Activated CD8-positive, alpha-beta T cell treated with anti-CD3 and anti-CD28 coated beads for 36 hours (primary cell): ENCODE measurements at regions of chr2 and their contacts with region 1.

Region 1: GRCh38 chr2:229821316-229821715 is 100.5 kb downstream of the TRIP12 start:
- DNase-seq: no peak
- ATAC-seq: no peak
- H3K4me3 Mint-ChIP-seq: no peak overlapping the region
- H3K27ac Mint-ChIP-seq: no peak overlapping the region
- H3K4me1 Mint-ChIP-seq: peaks cover 25% of the 10 kb centered on the region
- H3K27me3 Mint-ChIP-seq: no peaks in the 10 kb centered on the region
- CTCF ChIP-seq: no peak

Region 2: GRCh38 chr2:229810786-229811185 is 10.5 kb before region 1 on chr2:
- CTCF ChIA-PET with region 1: no interaction called
- POLR2A ChIA-PET with region 1: no interaction called
- intact Hi-C with region 1: no loop called
- DNase-seq: no peak
- ATAC-seq: no peak
- H3K4me3 Mint-ChIP-seq: no peak overlapping the region
- H3K27ac Mint-ChIP-seq: no peak overlapping the region
- H3K4me1 Mint-ChIP-seq: no peaks in the 10 kb centered on the region
- H3K27me3 Mint-ChIP-seq: no peaks in the 10 kb centered on the region
- CTCF ChIP-seq: no peak

Region 3: DNA sequence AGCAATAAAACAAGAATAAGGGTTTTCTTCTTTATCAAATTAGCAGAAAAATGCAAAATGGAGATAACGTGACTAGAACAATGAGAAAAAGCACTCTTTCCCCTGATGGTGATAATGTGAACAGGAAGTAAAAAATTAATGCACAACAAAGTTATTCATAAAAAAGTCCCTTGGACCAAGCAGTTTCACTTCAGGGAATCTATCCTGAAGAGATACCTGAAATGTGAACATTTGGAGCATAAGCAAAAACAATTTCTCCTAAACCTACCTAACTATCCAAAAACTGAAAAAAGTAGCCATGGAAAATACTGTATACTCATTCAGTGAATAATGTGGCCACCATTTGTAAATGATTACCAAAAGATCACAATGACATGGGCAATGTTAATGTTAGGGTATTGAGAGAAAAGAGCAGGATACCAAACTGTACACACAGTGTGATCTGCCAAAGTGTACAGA is 51.8 kb after region 1 on chr2:
- CTCF ChIA-PET with region 1: no interaction called
- POLR2A ChIA-PET with region 1: no interaction called
- intact Hi-C with region 1: loop called (anchors 5 kb)
- DNase-seq: no peak
- ATAC-seq: peak; percentile 42
- H3K4me3 Mint-ChIP-seq: no peak overlapping the region
- H3K27ac Mint-ChIP-seq: peak overlapping the region; percentile 50
- H3K4me1 Mint-ChIP-seq: peaks cover 41% of the 10 kb centered on the region
- H3K27me3 Mint-ChIP-seq: no peaks in the 10 kb centered on the region
- CTCF ChIP-seq: no peak